Breast epithelium (tissue), 4 donors: ENCODE measurements at regions of chr7 and their contacts with region 1.

Region 1: DNA sequence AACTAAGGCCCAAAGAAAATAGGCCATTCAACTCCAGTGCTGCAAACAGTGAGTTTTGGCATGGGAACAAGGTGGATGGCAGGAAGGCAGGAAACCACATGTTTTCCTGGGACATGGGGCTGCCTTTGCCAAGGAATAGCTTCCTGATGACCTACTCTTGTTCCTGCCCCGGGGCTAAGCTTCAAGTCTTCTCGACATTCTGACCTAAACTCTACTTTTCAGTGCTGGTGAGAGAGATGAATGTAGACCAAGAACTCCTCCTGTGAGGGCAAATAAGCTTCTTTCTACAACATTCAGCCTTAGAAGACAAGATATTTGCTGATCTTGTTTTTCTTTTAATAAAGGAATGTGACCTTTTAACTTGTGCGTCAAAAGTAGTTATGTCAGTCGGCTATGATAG is 199.0 kb downstream of the GPR37 start:
- DNase-seq: peak; percentile 49 to 78
- H3K4me3 ChIP-seq: no peak overlapping the region
- H3K27ac ChIP-seq: peak overlapping the region in 1 of 2 donors; percentile 45
- H3K4me1 ChIP-seq: no peaks in the 10 kb centered on the region
- H3K27me3 ChIP-seq: no peaks in the 10 kb centered on the region
- CTCF ChIP-seq: no peak
- POLR2A ChIP-seq: no peak

Region 2: GRCh38 chr7:124764847-124765400 is 198.3 kb after region 1 on chr7:
- intact Hi-C with region 1: loop called (anchors 5 kb)
- DNase-seq: peak in 1 of 2 donors; percentile 53
- H3K4me3 ChIP-seq: peak overlapping the region; percentile 37 to 71 (median 63)
- H3K27ac ChIP-seq: peak overlapping the region; percentile 27 to 34
- H3K4me1 ChIP-seq: no peaks in the 10 kb centered on the region
- H3K27me3 ChIP-seq: peaks cover 0 to 10% of the 10 kb centered on the region in 2 donors
- CTCF ChIP-seq: no peak
- POLR2A ChIP-seq: no peak